H1 (cell line): ENCODE measurements at regions of chr10 and their contacts with region 1.

Region 1: DNA sequence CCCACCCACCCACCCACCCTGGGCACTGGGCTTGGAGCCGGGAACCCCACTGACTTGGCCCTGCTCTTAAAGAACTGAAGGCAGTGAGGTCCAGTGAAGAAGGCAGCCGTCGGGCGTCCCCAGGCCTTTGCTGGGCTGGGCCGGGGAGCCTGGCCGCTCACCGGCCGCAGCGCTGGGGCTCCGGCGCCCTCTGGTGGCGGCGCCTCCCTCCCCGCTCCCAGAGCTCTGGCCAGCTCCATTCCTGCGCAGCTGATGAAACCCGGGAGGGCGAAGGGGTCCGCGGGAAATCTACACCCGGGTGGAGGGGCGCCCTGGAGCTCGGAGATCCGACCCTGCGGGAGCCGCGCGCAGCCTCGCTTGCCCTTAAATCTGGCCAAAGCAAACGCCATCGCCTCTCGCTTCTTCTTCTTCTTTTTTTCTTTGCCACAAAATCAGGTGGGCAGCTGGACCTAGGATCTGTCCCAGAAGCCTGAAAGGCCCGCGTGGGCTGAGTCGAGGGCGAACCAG is 1.7 kb upstream of the CXCL12 start:
- DNase-seq: peak in 1 of 2 experiments; percentile 83
- H3K4me3 ChIP-seq: peak overlapping the region in 1 of 4 experiments; percentile 43; a peak in 1 of 8 replicates
- H3K27ac ChIP-seq: no peak overlapping the region
- H3K4me1 ChIP-seq: peaks cover 0 to 31% (median 19%) of the 10 kb centered on the region in 4 experiments; a peak in 6 of 7 replicates
- H3K27me3 ChIP-seq: peaks cover 2 to 33% (median 26%) of the 10 kb centered on the region in 4 experiments
- CTCF ChIP-seq: peak; percentile 79 to 94 (median 82)
- EP300 ChIP-seq: no peak
- POLR2A ChIP-seq: no peak
- RAD21 ChIP-seq: peak; percentile 93 to 97

Region 2: GRCh38 chr10:44352316-44353127 is 34.1 kb before region 1 on chr10:
- CTCF ChIA-PET with region 1: interaction called, 18 read pairs
- POLR2A ChIA-PET with region 1: interaction called, 3 read pairs
- DNase-seq: no peak
- H3K4me3 ChIP-seq: no peak overlapping the region
- H3K27ac ChIP-seq: no peak overlapping the region
- H3K4me1 ChIP-seq: peaks cover 0 to 16% (median 6%) of the 10 kb centered on the region in 4 experiments; a peak in 5 of 7 replicates
- H3K27me3 ChIP-seq: no peaks in the 10 kb centered on the region; a peak in 1 of 7 replicates
- CTCF ChIP-seq: no peak
- EP300 ChIP-seq: no peak
- POLR2A ChIP-seq: no peak
- RAD21 ChIP-seq: no peak

Region 3: GRCh38 chr10:44370731-44371248 is 15.8 kb before region 1 on chr10:
- CTCF ChIA-PET with region 1: interaction called, 10 read pairs
- POLR2A ChIA-PET with region 1: interaction called, 60 read pairs
- DNase-seq: peak; percentile 58 to 80
- H3K4me3 ChIP-seq: peak overlapping the region in 3 of 4 experiments; percentile 5 to 44 (median 23); a peak in 5 of 8 replicates
- H3K27ac ChIP-seq: peak overlapping the region; percentile 85
- H3K4me1 ChIP-seq: peaks cover 6 to 29% (median 19%) of the 10 kb centered on the region in 4 experiments
- H3K27me3 ChIP-seq: no peaks in the 10 kb centered on the region; a peak in 1 of 7 replicates
- CTCF ChIP-seq: peak; percentile 42 to 62 (median 54)
- EP300 ChIP-seq: 0 out of 3 replicates have a peak, but pooled peaks of 1 of the 2 experiments have one; percentile 22
- POLR2A ChIP-seq: no peak; a peak in 1 of 3 replicates
- RAD21 ChIP-seq: peak; percentile 47 to 61

Region 4: DNA sequence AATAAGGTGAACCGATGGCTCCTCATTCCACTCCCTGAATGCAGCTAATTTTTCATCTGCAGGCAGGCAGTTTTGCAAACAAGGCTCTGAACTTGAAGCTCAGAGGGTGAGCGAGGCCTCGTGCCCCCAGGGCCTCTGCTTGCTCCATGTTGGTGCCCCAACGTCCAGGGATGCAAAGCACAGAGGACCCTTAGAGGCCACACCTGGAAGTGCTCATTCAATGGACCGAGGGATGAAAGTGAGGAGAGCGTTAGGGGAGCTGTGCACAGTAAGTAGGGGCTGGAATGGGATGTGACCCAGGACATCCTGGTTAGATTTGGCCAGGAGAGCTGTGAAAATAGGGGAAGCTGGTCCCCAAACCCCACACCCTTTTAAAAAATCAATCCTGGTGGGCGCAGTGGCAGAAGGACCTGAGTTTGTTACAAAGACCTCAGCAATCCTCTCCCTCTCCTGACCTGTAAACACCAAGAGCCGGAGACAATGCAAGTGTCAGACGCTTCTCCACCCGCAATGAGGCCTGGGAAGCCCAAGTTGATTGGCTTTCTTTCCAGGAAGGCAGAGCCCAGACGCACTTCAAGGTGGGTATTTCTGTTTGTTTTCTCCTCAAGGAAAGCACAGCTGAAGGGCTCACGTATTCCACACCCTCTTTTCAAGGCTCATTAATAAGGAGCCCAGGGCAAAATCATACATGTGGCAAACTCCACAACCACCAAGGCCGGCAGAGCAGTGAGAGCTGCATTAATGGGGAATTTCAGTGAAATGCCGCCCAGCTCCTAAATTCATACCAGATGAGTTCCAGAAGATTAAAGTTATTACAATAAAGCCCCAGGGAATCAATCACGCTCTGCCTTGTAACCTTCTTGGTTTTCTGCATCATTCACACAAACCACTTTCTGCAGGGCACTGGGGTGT is 12.4 kb after region 1 on chr10:
- CTCF ChIA-PET with region 1: interaction called, 32 read pairs
- POLR2A ChIA-PET with region 1: interaction called, 5 read pairs
- DNase-seq: no peak
- H3K4me3 ChIP-seq: no peak overlapping the region
- H3K27ac ChIP-seq: no peak overlapping the region
- H3K4me1 ChIP-seq: peaks cover 7 to 25% (median 24%) of the 10 kb centered on the region in 4 experiments
- H3K27me3 ChIP-seq: peaks cover 0 to 2% (median 0%) of the 10 kb centered on the region in 4 experiments; a peak in 1 of 7 replicates
- CTCF ChIP-seq: peak in 2 of 3 experiments; percentile 15 to 24; a peak in 1 of 4 replicates
- EP300 ChIP-seq: no peak
- POLR2A ChIP-seq: no peak
- RAD21 ChIP-seq: peak; percentile 27 to 38; a peak in 2 of 4 replicates

Region 5: DNA sequence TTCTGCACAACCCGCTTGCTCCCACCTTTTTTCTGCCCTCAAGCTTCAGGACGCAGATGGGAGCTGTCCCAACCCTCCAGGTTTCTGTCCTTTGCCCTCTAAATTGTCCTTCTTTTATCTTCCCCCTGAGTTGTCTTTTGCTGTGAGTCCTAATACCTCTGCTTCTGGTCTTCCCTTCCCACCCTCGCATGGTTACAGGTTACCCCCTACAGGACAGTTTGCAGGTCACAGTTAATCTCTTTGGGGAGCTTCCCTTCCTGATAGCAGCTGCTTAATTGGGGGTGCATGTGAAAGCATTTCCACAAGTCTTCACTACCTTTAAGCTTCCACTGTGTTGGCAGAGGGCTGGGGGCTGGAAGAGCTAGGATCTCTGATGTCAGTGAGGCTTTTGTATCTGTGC is 119.8 kb after region 1 on chr10:
- CTCF ChIA-PET with region 1: interaction called, 14 read pairs
- POLR2A ChIA-PET with region 1: no interaction called
- DNase-seq: no peak
- H3K4me3 ChIP-seq: no peak overlapping the region
- H3K27ac ChIP-seq: no peak overlapping the region
- H3K4me1 ChIP-seq: no peaks in the 10 kb centered on the region
- H3K27me3 ChIP-seq: peaks cover 0 to 2% (median 0%) of the 10 kb centered on the region in 4 experiments; a peak in 1 of 7 replicates
- CTCF ChIP-seq: peak; percentile 21 to 43 (median 37); a peak in 3 of 4 replicates
- EP300 ChIP-seq: no peak
- POLR2A ChIP-seq: no peak
- RAD21 ChIP-seq: peak; percentile 66 to 75

Region 6: GRCh38 chr10:44517635-44518034 is 131.0 kb after region 1 on chr10:
- CTCF ChIA-PET with region 1: interaction called, 11 read pairs
- POLR2A ChIA-PET with region 1: no interaction called
- DNase-seq: peak in 1 of 2 experiments; percentile 66
- H3K4me3 ChIP-seq: no peak overlapping the region
- H3K27ac ChIP-seq: no peak overlapping the region
- H3K4me1 ChIP-seq: no peaks in the 10 kb centered on the region
- H3K27me3 ChIP-seq: no peaks in the 10 kb centered on the region
- CTCF ChIP-seq: peak; percentile 61 to 87 (median 81)
- EP300 ChIP-seq: no peak
- POLR2A ChIP-seq: no peak
- RAD21 ChIP-seq: peak; percentile 60 to 69